ENCODE measurements at regions of chrX and their contacts with region 1.

Region 1: GRCh38 chrX:48897621-48898306 is at the starts of genes PQBP1 and TIMM17B:
- DNase-seq: peak; percentile 72 to 93 (median 86)
- ATAC-seq: peak; percentile 85 to 92 (median 90)
- H3K4me3 ChIP-seq: peak within 1 kb of the TSS; percentile 66 to 94
- H3K4me3 Mint-ChIP-seq: peak within 1 kb of the TSS; percentile 75 to 89 (median 85)
- H3K27ac ChIP-seq: peak within 1 kb of the TSS; percentile 97
- H3K27ac Mint-ChIP-seq: peak within 1 kb of the TSS; percentile 94 to 95
- H3K4me1 ChIP-seq: peaks cover 2 to 32% of the 10 kb centered on the region in 2 experiments
- H3K4me1 Mint-ChIP-seq: peaks cover 16 to 34% (median 19%) of the 10 kb centered on the region in 3 donors
- H3K27me3 ChIP-seq: no peaks in the 10 kb centered on the region
- H3K27me3 Mint-ChIP-seq: peaks cover 0 to 5% of the 10 kb centered on the region in 2 donors
- total RNA-seq, gene PQBP1: 62.5 to 79.5 (median 73.9) TPM
- total RNA-seq, gene TIMM17B: 40.5 to 52.1 (median 49.3) TPM

Region 2: DNA sequence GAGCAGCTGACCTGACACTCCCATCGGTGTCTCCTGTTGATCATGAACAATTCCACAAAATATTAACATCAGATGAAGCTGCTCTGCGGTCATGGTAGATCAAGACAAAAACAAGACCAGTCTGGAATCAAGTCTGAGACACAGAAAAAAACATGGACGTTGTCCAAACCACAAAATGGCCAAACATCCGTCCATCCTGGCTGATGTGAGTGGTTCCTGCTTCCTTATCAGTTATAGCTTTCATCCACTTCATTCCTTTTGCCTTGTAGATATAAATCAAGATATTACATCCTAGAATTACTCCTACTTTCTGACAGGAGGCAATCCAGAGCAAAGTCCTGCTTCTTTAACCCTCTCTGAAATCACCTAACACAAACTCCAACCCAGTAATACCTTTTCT is 33.6 kb before region 1 on chrX:
- CTCF ChIA-PET with region 1: no interaction called
- POLR2A ChIA-PET with region 1: no interaction called
- DNase-seq: no peak
- ATAC-seq: no peak
- H3K4me3 ChIP-seq: no peak overlapping the region
- H3K4me3 Mint-ChIP-seq: no peak overlapping the region
- H3K27ac ChIP-seq: no peak overlapping the region
- H3K27ac Mint-ChIP-seq: no peak overlapping the region
- H3K4me1 ChIP-seq: no peaks in the 10 kb centered on the region
- H3K4me1 Mint-ChIP-seq: no peaks in the 10 kb centered on the region
- H3K27me3 ChIP-seq: no peaks in the 10 kb centered on the region
- H3K27me3 Mint-ChIP-seq: peaks cover 2 to 34% of the 10 kb centered on the region in 2 donors

Region 3: DNA sequence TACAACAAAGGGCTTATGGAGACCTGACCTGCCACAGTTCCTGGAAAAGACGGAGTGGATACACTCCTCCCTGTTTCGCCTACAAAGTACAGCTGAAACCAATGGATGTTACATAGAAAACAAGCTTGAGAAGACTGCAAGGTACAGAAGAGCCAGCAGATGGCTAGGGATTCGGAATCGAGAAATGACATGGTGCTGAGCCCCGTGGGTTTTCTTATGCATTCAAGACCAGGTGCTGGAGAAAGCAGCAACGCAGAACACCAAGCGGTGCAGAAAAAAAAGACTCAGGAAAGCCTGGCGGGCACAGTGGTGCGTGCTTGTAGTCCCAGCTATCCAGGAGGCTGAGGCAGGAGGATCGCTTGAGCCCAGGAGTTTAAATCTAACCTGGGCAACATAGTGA is 14.0 kb before region 1 on chrX:
- CTCF ChIA-PET with region 1: no interaction called
- POLR2A ChIA-PET with region 1: no interaction called
- DNase-seq: no peak
- ATAC-seq: no peak
- H3K4me3 ChIP-seq: no peak overlapping the region
- H3K4me3 Mint-ChIP-seq: no peak overlapping the region
- H3K27ac ChIP-seq: no peak overlapping the region
- H3K27ac Mint-ChIP-seq: no peak overlapping the region
- H3K4me1 ChIP-seq: no peaks in the 10 kb centered on the region
- H3K4me1 Mint-ChIP-seq: no peaks in the 10 kb centered on the region
- H3K27me3 ChIP-seq: no peaks in the 10 kb centered on the region
- H3K27me3 Mint-ChIP-seq: peaks cover 0 to 6% of the 10 kb centered on the region in 2 donors

Region 4: GRCh38 chrX:48911412-48912182 is 13.8 kb after region 1 on chrX and contains the start of gene SLC35A2:
- CTCF ChIA-PET with region 1: no interaction called
- POLR2A ChIA-PET with region 1: interaction called, 15 to 16 read pairs
- DNase-seq: peak; percentile 71 to 91 (median 87)
- ATAC-seq: peak; percentile 76 to 83 (median 78)
- H3K4me3 ChIP-seq: peak within 1 kb of the TSS; percentile 68 to 85
- H3K4me3 Mint-ChIP-seq: peak within 1 kb of the TSS; percentile 86 to 94 (median 88)
- H3K27ac ChIP-seq: peak within 1 kb of the TSS; percentile 74
- H3K27ac Mint-ChIP-seq: peak within 1 kb of the TSS; percentile 92 to 93
- H3K4me1 ChIP-seq: peaks cover 2 to 55% of the 10 kb centered on the region in 2 experiments
- H3K4me1 Mint-ChIP-seq: peaks cover 49 to 59% (median 54%) of the 10 kb centered on the region in 3 donors
- H3K27me3 ChIP-seq: no peaks in the 10 kb centered on the region
- H3K27me3 Mint-ChIP-seq: peaks cover 0 to 11% of the 10 kb centered on the region in 2 donors
- total RNA-seq, gene SLC35A2: 14.2 to 35.1 (median 16.2) TPM

Region 5: DNA sequence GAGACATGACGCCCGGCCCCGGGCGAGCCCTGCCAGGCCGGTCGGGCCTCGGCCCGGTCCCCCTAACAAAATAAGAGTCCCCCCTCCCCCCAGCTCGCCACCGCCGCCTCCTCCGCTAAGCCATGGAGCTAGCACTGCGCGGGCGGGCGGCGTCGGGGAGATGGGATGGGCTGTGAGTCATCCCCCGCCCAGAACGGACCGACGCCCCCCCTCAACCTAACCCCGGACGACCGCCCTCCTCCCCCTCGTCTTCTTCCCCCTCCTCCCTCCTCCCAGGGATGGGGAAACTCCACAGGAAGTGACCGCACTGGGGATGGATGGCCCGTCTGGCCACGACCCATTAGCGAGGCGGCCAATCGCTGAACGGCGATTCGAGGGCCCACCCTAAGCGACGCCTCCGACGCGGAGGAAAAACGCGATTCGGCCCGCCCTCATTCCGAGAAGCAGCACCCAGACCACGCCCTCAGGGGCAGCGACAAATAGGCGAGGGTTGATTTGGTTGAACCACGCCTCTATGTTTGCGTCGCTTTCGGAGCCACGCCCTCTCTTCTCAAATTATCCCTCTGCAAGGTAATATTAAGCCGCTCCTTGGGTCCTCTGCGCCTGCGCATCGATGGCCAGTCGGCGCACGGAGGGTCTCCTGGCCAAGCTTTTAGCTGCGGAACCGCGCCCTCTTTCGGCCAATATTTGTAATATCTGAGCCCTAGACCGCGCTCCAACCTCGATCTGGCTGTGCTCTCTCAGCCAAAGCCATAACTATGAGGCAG is 145.6 kb after region 1 on chrX and contains the start of gene TFE3:
- CTCF ChIA-PET with region 1: no interaction called
- POLR2A ChIA-PET with region 1: no interaction called
- DNase-seq: peak; percentile 82 to 97 (median 94)
- ATAC-seq: peak; percentile 89 to 93 (median 90)
- H3K4me3 ChIP-seq: peak within 1 kb of the TSS; percentile 62 to 63
- H3K4me3 Mint-ChIP-seq: peak within 1 kb of the TSS; percentile 80 to 89 (median 84)
- H3K27ac ChIP-seq: peak within 1 kb of the TSS; percentile 84
- H3K27ac Mint-ChIP-seq: peak within 1 kb of the TSS; percentile 91 to 92
- H3K4me1 ChIP-seq: peaks cover 2 to 34% of the 10 kb centered on the region in 2 experiments
- H3K4me1 Mint-ChIP-seq: peaks cover 32 to 46% (median 40%) of the 10 kb centered on the region in 3 donors
- H3K27me3 ChIP-seq: no peaks in the 10 kb centered on the region
- H3K27me3 Mint-ChIP-seq: no peaks in the 10 kb centered on the region
- total RNA-seq, gene TFE3: 34.3 to 38.8 (median 35.6) TPM

Region 6: DNA sequence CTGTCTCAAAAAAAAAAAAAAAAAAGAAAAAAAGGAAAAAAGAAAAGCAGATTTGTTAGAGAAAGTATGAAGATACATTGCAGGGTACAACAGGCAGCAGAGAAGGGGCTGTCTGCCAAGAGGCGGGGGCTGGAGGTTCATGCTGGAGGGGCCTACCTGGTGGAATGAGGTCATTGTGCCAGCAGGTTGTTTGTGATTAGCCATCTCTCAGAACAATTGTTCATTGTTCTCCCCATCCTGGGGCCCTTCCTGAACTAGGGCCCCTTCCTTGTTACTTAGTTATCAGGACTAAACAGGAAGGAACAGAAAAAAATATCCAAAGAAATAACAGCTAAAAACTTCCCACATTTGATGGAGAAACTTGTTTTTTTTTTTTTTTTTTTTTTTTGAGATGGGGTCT is 239.7 kb after region 1 on chrX:
- CTCF ChIA-PET with region 1: no interaction called
- POLR2A ChIA-PET with region 1: no interaction called
- DNase-seq: no peak
- ATAC-seq: no peak
- H3K4me3 ChIP-seq: no peak overlapping the region
- H3K4me3 Mint-ChIP-seq: no peak overlapping the region
- H3K27ac ChIP-seq: no peak overlapping the region
- H3K27ac Mint-ChIP-seq: no peak overlapping the region
- H3K4me1 ChIP-seq: no peaks in the 10 kb centered on the region
- H3K4me1 Mint-ChIP-seq: no peaks in the 10 kb centered on the region
- H3K27me3 ChIP-seq: no peaks in the 10 kb centered on the region
- H3K27me3 Mint-ChIP-seq: no peaks in the 10 kb centered on the region